Aorta (tissue), 5 donors: ENCODE measurements at regions of chr7 and their contacts with region 1.

Region 1: GRCh38 chr7:68364886-68365625 is 1233.2 kb upstream of the AUTS2 start:
- DNase-seq: no peak
- ATAC-seq: no peak
- H3K4me3 ChIP-seq: no peak overlapping the region
- H3K27ac ChIP-seq: no peak overlapping the region
- H3K4me1 ChIP-seq: no peaks in the 10 kb centered on the region
- H3K27me3 ChIP-seq: no peaks in the 10 kb centered on the region

Region 2: GRCh38 chr7:67392643-67393438 is 972.2 kb before region 1 on chr7:
- intact Hi-C with region 1: loop called in 1 of 2 experiments (anchors 10 kb)
- DNase-seq: no peak
- ATAC-seq: no peak
- H3K4me3 ChIP-seq: no peak overlapping the region
- H3K27ac ChIP-seq: no peak overlapping the region
- H3K4me1 ChIP-seq: no peaks in the 10 kb centered on the region
- H3K27me3 ChIP-seq: no peaks in the 10 kb centered on the region

Region 3: DNA sequence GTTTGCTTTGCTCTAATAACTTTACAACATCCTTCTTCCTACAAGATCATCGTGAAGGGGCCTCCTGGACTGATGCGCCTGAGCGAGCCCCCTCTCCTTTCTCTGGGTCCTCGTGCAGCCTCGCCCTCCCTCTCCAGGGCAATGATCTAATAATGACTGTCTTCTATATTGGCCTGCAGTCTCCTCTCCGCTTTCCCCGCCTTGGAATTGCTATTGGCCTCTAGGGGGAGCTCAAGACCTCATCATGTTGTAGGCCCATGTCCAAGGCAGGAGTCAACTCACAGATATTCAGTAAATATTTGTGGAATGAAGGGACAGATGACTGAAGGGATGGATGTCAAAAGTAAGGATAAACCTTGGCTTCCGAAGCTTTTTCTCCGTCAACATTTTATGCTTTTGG is 188.1 kb before region 1 on chr7:
- intact Hi-C with region 1: no loop called
- DNase-seq: no peak
- ATAC-seq: no peak
- H3K4me3 ChIP-seq: no peak overlapping the region
- H3K27ac ChIP-seq: no peak overlapping the region
- H3K4me1 ChIP-seq: no peaks in the 10 kb centered on the region
- H3K27me3 ChIP-seq: peaks cover 0 to 2% of the 10 kb centered on the region in 2 donors